GM12878 (cell line): ENCODE measurements at regions of chr5 and their contacts with region 1.

Region 1: GRCh38 chr5:126656396-126657007 is 55.8 kb downstream of the PHAX start:
- DNase-seq: no peak
- ATAC-seq: peak; percentile 22; the same call in 1 of the 3 replicates
- H3K4me3 ChIP-seq: no peak overlapping the region
- H3K27ac ChIP-seq: no peak overlapping the region
- H3K4me1 ChIP-seq: no peaks in the 10 kb centered on the region
- H3K27me3 ChIP-seq: no peaks in the 10 kb centered on the region
- CTCF ChIP-seq: peak; percentile 75 to 88 (median 86)
- EP300 ChIP-seq: no peak
- POLR2A ChIP-seq: no peak
- RAD21 ChIP-seq: peak; percentile 98

Region 2: GRCh38 chr5:126676195-126676624 is 19.7 kb after region 1 on chr5:
- CTCF ChIA-PET with region 1: interaction called, 31 read pairs
- POLR2A ChIA-PET with region 1: interaction called, 3 read pairs
- RAD21 ChIA-PET with region 1: interaction called, 15 read pairs
- SMC1A ChIA-PET with region 1: interaction called, 12 read pairs
- in situ Hi-C with region 1: no loop called
- intact Hi-C with region 1: no loop called
- DNase-seq: peak; percentile 68
- ATAC-seq: peak; percentile 71
- H3K4me3 ChIP-seq: no peak overlapping the region
- H3K27ac ChIP-seq: no peak overlapping the region
- H3K4me1 ChIP-seq: peaks cover 2% of the 10 kb centered on the region; the same call in 1 of the 2 replicates
- H3K27me3 ChIP-seq: no peaks in the 10 kb centered on the region
- CTCF ChIP-seq: peak; percentile 75 to 94 (median 82)
- EP300 ChIP-seq: no peak
- POLR2A ChIP-seq: no peak
- RAD21 ChIP-seq: peak; percentile 98

Region 3: GRCh38 chr5:126686451-126687126 is 30.1 kb after region 1 on chr5:
- CTCF ChIA-PET with region 1: no interaction called
- POLR2A ChIA-PET with region 1: no interaction called
- RAD21 ChIA-PET with region 1: no interaction called
- SMC1A ChIA-PET with region 1: no interaction called
- in situ Hi-C with region 1: no loop called
- intact Hi-C with region 1: no loop called
- DNase-seq: peak; percentile 15
- ATAC-seq: peak; percentile 68
- H3K4me3 ChIP-seq: no peak overlapping the region
- H3K27ac ChIP-seq: no peak overlapping the region
- H3K4me1 ChIP-seq: peaks cover 9% of the 10 kb centered on the region
- H3K27me3 ChIP-seq: no peaks in the 10 kb centered on the region
- CTCF ChIP-seq: no peak
- EP300 ChIP-seq: peak in 1 of 2 experiments; percentile 32; a peak in 1 of 4 replicates
- POLR2A ChIP-seq: no peak
- RAD21 ChIP-seq: no peak

Region 4: GRCh38 chr5:126753227-126753626 is 96.7 kb after region 1 on chr5:
- CTCF ChIA-PET with region 1: no interaction called
- POLR2A ChIA-PET with region 1: no interaction called
- RAD21 ChIA-PET with region 1: no interaction called
- SMC1A ChIA-PET with region 1: no interaction called
- in situ Hi-C with region 1: no loop called
- intact Hi-C with region 1: no loop called
- DNase-seq: no peak
- ATAC-seq: no peak
- H3K4me3 ChIP-seq: no peak overlapping the region
- H3K27ac ChIP-seq: no peak overlapping the region
- H3K4me1 ChIP-seq: peaks cover 14% of the 10 kb centered on the region
- H3K27me3 ChIP-seq: no peaks in the 10 kb centered on the region
- CTCF ChIP-seq: no peak
- EP300 ChIP-seq: no peak
- POLR2A ChIP-seq: no peak
- RAD21 ChIP-seq: no peak

Region 5: GRCh38 chr5:126808521-126808988 is 152.1 kb after region 1 on chr5:
- CTCF ChIA-PET with region 1: interaction called, 13 read pairs
- POLR2A ChIA-PET with region 1: interaction called, 3 read pairs
- RAD21 ChIA-PET with region 1: interaction called, 14 read pairs
- SMC1A ChIA-PET with region 1: interaction called, 20 read pairs
- in situ Hi-C with region 1: no loop called
- intact Hi-C with region 1: loop called (anchors 1 kb)
- DNase-seq: no peak
- ATAC-seq: peak; percentile 68
- H3K4me3 ChIP-seq: no peak overlapping the region
- H3K27ac ChIP-seq: no peak overlapping the region; the same call in 1 of the 2 replicates
- H3K4me1 ChIP-seq: no peaks in the 10 kb centered on the region
- H3K27me3 ChIP-seq: no peaks in the 10 kb centered on the region
- CTCF ChIP-seq: peak; percentile 29 to 41 (median 40); a peak in 4 of 6 replicates
- EP300 ChIP-seq: no peak
- POLR2A ChIP-seq: no peak
- RAD21 ChIP-seq: peak; percentile 66

Region 6: DNA sequence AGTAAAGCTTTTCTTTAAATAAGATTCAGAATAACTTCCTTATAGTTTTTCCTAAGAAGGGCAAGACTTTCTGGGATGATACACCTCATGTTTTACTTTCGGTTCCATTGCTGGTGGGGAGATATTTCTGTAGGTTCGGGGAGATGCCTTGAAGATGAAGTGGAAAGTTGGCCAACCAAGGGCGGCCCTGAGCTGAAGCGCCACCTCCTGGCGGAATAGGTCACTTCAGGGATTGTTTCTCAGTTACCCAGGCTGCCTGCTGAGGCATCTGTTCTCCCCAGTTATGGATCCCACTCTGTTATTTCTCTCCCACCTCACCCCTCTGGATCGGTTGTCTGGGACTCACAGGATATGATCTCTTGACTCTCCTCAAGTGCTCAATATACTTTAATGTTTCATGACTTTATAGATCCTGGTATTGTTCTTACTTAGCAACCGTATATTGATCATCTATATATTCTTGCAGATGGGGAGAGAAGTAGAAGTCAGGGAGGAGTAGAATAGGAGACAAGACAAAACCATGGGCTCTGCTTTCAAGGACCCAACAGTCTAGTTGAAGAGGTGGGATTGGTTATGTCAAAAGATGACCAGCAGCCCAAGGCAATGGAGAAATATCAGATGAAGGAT is 657.5 kb after region 1 on chr5:
- CTCF ChIA-PET with region 1: interaction called, 6 read pairs
- POLR2A ChIA-PET with region 1: no interaction called
- RAD21 ChIA-PET with region 1: interaction called, 4 read pairs
- SMC1A ChIA-PET with region 1: interaction called, 12 read pairs
- in situ Hi-C with region 1: loop called (anchors 5 kb)
- intact Hi-C with region 1: loop called (anchors 1 kb)
- DNase-seq: no peak
- ATAC-seq: peak; percentile 97
- H3K4me3 ChIP-seq: no peak overlapping the region
- H3K27ac ChIP-seq: no peak overlapping the region
- H3K4me1 ChIP-seq: no peaks in the 10 kb centered on the region
- H3K27me3 ChIP-seq: no peaks in the 10 kb centered on the region; a peak in 1 of 4 replicates
- CTCF ChIP-seq: peak; percentile 80 to 86 (median 83)
- EP300 ChIP-seq: no peak
- POLR2A ChIP-seq: no peak
- RAD21 ChIP-seq: peak; percentile 80

Region 7: GRCh38 chr5:127492854-127493738 is 836.6 kb after region 1 on chr5:
- CTCF ChIA-PET with region 1: interaction called, 11 read pairs
- POLR2A ChIA-PET with region 1: no interaction called
- RAD21 ChIA-PET with region 1: interaction called, 4 read pairs
- SMC1A ChIA-PET with region 1: interaction called, 3 read pairs
- in situ Hi-C with region 1: loop called (anchors 10 kb)
- intact Hi-C with region 1: loop called (anchors 2 kb)
- DNase-seq: peak; percentile 26
- ATAC-seq: peak; percentile 75
- H3K4me3 ChIP-seq: no peak overlapping the region
- H3K27ac ChIP-seq: no peak overlapping the region
- H3K4me1 ChIP-seq: no peaks in the 10 kb centered on the region
- H3K27me3 ChIP-seq: no peaks in the 10 kb centered on the region
- CTCF ChIP-seq: peak; percentile 57 to 66 (median 64)
- EP300 ChIP-seq: no peak
- POLR2A ChIP-seq: no peak
- RAD21 ChIP-seq: peak; percentile 22; the same call in 1 of the 2 replicates